Ascending aorta (tissue), 2 donors: ENCODE measurements at regions of chr5 and their contacts with region 1.

Region 1: GRCh38 chr5:10627160-10627701 is 63.4 kb downstream of the ANKRD33B start:
- DNase-seq: no peak
- H3K4me3 ChIP-seq: peak overlapping the region; percentile 33 to 63
- H3K27ac ChIP-seq: peak overlapping the region; percentile 70 to 89
- H3K4me1 ChIP-seq: peaks cover 0 to 12% of the 10 kb centered on the region in 2 donors
- H3K27me3 ChIP-seq: no peaks in the 10 kb centered on the region
- CTCF ChIP-seq: no peak

Region 2: DNA sequence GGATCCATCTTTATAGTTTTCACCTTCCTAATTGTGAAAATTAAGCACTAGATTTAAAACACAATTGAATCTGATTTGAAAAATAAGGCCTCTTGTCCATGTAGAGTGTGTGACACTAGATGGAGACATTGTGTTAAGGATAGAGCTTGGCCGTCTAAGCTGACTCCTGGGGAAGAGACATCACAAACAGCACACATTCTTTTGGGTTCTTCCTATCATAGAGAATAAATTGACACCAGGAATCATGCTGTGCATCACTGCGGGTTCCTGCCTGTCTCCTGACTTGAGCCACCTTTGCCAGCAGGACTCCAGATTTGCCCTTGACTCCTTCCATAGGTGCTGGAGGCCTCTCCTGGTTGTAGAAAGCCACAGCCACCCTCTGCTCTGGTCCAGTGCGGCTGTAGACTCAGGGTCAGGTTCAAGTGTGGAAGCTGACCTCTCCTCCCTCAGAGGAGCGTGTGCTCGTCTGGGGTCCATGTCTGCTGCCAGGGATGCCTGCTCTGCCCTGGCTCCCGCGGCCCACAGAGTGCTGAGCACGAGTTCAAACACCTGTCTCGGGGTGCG is 174.4 kb before region 1 on chr5:
- intact Hi-C with region 1: loop called (anchors 1 kb)
- DNase-seq: no peak
- H3K4me3 ChIP-seq: no peak overlapping the region
- H3K27ac ChIP-seq: peak overlapping the region in 1 of 2 donors; percentile 1
- H3K4me1 ChIP-seq: peaks cover 0 to 15% of the 10 kb centered on the region in 2 donors
- H3K27me3 ChIP-seq: no peaks in the 10 kb centered on the region
- CTCF ChIP-seq: peak; percentile 63 to 74 (median 70)

Region 3: DNA sequence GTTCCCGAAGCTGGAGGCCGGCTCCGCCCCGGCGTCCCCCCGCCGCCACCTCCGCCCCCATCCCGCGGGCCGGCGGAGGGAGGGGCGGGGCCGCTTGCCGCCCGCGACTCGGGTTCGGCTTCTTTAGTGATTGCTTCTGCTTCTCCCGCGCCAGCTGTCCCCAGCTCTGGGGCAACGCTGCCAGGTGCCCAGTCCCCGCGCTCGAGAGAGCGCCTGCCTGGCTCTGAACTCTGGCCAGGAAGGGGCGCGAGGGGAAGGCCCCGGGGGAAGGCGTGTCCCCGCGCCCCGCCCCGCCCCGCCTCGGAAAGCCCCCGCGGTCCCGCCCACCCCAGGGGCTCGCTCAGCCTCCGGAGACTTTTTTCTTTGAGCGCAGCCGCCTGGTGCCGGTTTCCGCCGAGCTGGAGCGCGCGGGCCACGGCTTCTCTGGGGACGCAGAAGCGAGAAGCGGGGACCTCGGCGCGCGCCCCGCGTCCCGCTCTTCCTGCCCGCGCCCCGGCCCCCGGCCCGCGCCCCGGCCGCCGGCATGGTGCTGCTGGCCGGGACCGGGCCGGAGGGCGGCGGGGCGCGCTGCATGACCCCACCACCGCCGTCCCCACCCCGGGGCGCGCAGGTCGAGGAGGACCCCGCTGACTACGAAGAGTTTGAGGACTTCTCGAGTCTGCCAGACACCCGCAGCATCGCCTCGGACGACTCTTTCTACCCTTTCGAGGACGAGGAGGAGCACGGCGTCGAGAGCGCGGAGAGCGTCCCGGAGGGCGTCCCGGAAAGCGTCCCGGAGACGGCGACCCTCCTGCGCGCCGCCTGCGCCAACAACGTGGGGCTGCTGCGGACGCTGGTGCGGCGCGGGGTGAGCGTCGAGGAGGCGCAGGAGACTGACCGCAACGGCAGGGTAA is 63.0 kb before region 1 on chr5 and contains the start of gene ANKRD33B:
- intact Hi-C with region 1: loop called (anchors 2 kb)
- DNase-seq: peak in 1 of 2 donors; percentile 79
- H3K4me3 ChIP-seq: peak within 1 kb of the TSS; percentile 72 to 76
- H3K27ac ChIP-seq: peak within 1 kb of the TSS; percentile 50 to 80
- H3K4me1 ChIP-seq: peaks cover 0 to 21% of the 10 kb centered on the region in 2 donors
- H3K27me3 ChIP-seq: no peaks in the 10 kb centered on the region
- CTCF ChIP-seq: no peak
- total RNA-seq, gene ANKRD33B: 7.2 TPM

Region 4: GRCh38 chr5:10601246-10602030 is 25.8 kb before region 1 on chr5:
- intact Hi-C with region 1: loop called (anchors 2 kb)
- DNase-seq: peak; percentile 62 to 91
- H3K4me3 ChIP-seq: peak overlapping the region in 1 of 2 donors; percentile 47
- H3K27ac ChIP-seq: peak overlapping the region; percentile 72 to 82
- H3K4me1 ChIP-seq: peaks cover 2 to 27% of the 10 kb centered on the region in 2 donors
- H3K27me3 ChIP-seq: no peaks in the 10 kb centered on the region
- CTCF ChIP-seq: no peak

Region 5: GRCh38 chr5:10825897-10826644 is 198.8 kb after region 1 on chr5:
- intact Hi-C with region 1: no loop called
- DNase-seq: no peak
- H3K4me3 ChIP-seq: no peak overlapping the region
- H3K27ac ChIP-seq: no peak overlapping the region
- H3K4me1 ChIP-seq: no peaks in the 10 kb centered on the region
- H3K27me3 ChIP-seq: no peaks in the 10 kb centered on the region
- CTCF ChIP-seq: no peak